ENCODE measurements at regions of chr7 and their contacts with region 1.

Region 1: GRCh38 chr7:1028031-1028770 is 16.1 kb upstream of the GPR146 start:
- DNase-seq: no peak
- ATAC-seq: peak; percentile 62
- H3K4me3 ChIP-seq: peak overlapping the region; percentile 99
- H3K27ac ChIP-seq: peak overlapping the region; percentile 95
- H3K4me1 ChIP-seq: peaks cover 36% of the 10 kb centered on the region
- H3K27me3 ChIP-seq: no peaks in the 10 kb centered on the region
- CTCF ChIP-seq: no peak
- EP300 ChIP-seq: no peak; a peak in 1 of 4 replicates
- POLR2A ChIP-seq: peak; percentile 84
- RAD21 ChIP-seq: no peak

Region 2: GRCh38 chr7:974820-975681 is 53.1 kb before region 1 on chr7 and contains the start of gene COX19:
- CTCF ChIA-PET with region 1: interaction called, 4 read pairs
- POLR2A ChIA-PET with region 1: interaction called, 5 read pairs
- RAD21 ChIA-PET with region 1: interaction called, 3 read pairs
- SMC1A ChIA-PET with region 1: interaction called, 10 read pairs
- in situ Hi-C with region 1: no loop called
- intact Hi-C with region 1: no loop called
- DNase-seq: peak; percentile 42
- ATAC-seq: peak; percentile 87
- H3K4me3 ChIP-seq: peak within 1 kb of the TSS; percentile 78
- H3K27ac ChIP-seq: peak within 1 kb of the TSS; percentile 86
- H3K4me1 ChIP-seq: no peaks in the 10 kb centered on the region
- H3K27me3 ChIP-seq: no peaks in the 10 kb centered on the region
- CTCF ChIP-seq: no peak
- EP300 ChIP-seq: no peak
- POLR2A ChIP-seq: peak; percentile 94
- RAD21 ChIP-seq: no peak
- polyA plus RNA-seq, gene COX19: 3.7 to 6.6 TPM

Region 3: DNA sequence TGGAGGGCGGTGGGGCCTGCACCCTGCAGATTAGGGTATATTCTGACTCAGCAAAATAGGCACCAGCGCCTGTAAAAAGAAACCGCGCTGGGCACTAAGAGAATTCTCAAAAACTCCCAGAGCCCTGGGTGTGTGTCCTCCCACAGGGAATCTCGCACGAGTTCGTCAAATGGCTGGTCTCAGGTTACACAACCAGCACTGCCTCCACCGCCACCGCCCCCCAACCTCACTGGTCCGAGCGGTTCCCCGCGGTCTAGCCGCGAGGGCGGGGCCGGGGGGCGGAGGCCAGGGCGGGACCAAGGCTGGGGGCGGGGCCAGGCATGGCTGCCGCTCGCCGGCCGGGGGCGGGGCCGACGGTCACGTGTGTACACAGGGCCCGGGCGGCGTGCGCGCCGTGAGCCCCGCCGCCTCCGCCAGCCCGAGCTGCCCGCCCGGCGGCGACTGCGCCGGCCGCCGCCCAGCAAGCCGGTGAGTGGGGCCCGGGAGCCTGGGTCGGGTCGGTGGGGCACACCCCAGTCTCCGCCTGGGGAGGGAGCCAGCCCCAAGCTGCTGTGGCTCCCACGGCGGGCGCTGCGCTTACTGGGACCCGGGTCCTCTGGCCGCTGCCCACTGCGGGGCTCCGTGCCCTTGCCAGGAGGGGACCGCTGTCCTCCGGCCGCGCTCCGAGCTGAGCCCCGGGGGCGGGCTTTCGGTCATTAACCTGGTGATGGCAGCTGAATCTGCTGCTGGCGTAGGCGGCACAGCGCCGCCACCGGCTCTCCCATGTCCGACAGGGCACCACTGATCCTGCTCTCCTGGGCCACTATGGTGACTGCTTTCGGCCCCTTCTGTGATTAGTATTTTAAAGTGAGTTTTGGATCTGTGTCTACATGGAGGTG is 16.2 kb after region 1 on chr7 and contains the start of gene GPR146:
- CTCF ChIA-PET with region 1: interaction called, 31 read pairs
- POLR2A ChIA-PET with region 1: interaction called, 21 read pairs
- RAD21 ChIA-PET with region 1: interaction called, 15 read pairs
- SMC1A ChIA-PET with region 1: interaction called, 14 read pairs
- in situ Hi-C with region 1: no loop called
- intact Hi-C with region 1: loop called (anchors 1 kb)
- DNase-seq: no peak
- ATAC-seq: peak; percentile 98
- H3K4me3 ChIP-seq: peak within 1 kb of the TSS; percentile 60; the same call in 1 of the 2 replicates
- H3K27ac ChIP-seq: peak within 1 kb of the TSS; percentile 68
- H3K4me1 ChIP-seq: peaks cover 14% of the 10 kb centered on the region
- H3K27me3 ChIP-seq: no peaks in the 10 kb centered on the region
- CTCF ChIP-seq: peak; percentile 53 to 66 (median 63)
- EP300 ChIP-seq: no peak
- POLR2A ChIP-seq: peak; percentile 71
- RAD21 ChIP-seq: no peak; the same call in 1 of the 2 replicates
- polyA plus RNA-seq, gene GPR146: not detected

Region 4: GRCh38 chr7:1059200-1060091 is 31.2 kb after region 1 on chr7:
- CTCF ChIA-PET with region 1: interaction called, 74 read pairs
- POLR2A ChIA-PET with region 1: interaction called, 40 read pairs
- RAD21 ChIA-PET with region 1: interaction called, 45 read pairs
- SMC1A ChIA-PET with region 1: interaction called, 31 read pairs
- in situ Hi-C with region 1: loop called (anchors 5 kb)
- intact Hi-C with region 1: loop called (anchors 1 kb)
- DNase-seq: peak; percentile 33
- ATAC-seq: peak; percentile 69
- H3K4me3 ChIP-seq: no peak overlapping the region
- H3K27ac ChIP-seq: no peak overlapping the region
- H3K4me1 ChIP-seq: peaks cover 33% of the 10 kb centered on the region
- H3K27me3 ChIP-seq: no peaks in the 10 kb centered on the region
- CTCF ChIP-seq: no peak
- EP300 ChIP-seq: no peak
- POLR2A ChIP-seq: no peak
- RAD21 ChIP-seq: no peak

Measured in GM12878 (cell line).